HCT116 (cell line): ENCODE measurements at regions of chr18 and their contacts with region 1.

Region 1: GRCh38 chr18:30999186-30999585 is 43.4 kb downstream of the DSC3 start:
- DNase-seq: no peak
- ATAC-seq: no peak
- H3K4me3 ChIP-seq: no peak overlapping the region
- H3K27ac ChIP-seq: no peak overlapping the region
- H3K4me1 ChIP-seq: no peaks in the 10 kb centered on the region
- H3K27me3 ChIP-seq: no peaks in the 10 kb centered on the region
- CTCF ChIP-seq: peak in 2 of 3 experiments; percentile 44 to 45; a peak in 3 of 6 replicates
- POLR2A ChIP-seq: no peak
- RAD21 ChIP-seq: peak; percentile 60

Region 2: GRCh38 chr18:31206787-31207381 is 207.7 kb after region 1 on chr18:
- CTCF ChIA-PET with region 1: no interaction called
- POLR2A ChIA-PET with region 1: no interaction called
- RAD21 ChIA-PET with region 1: no interaction called
- intact Hi-C with region 1: loop called (anchors 10 kb)
- DNase-seq: peak; percentile 97
- ATAC-seq: peak; percentile 95
- H3K4me3 ChIP-seq: peak overlapping the region; percentile 8 to 20; a peak in 3 of 4 replicates
- H3K27ac ChIP-seq: peak overlapping the region; percentile 32
- H3K4me1 ChIP-seq: peaks cover 17 to 32% of the 10 kb centered on the region in 2 experiments
- H3K27me3 ChIP-seq: no peaks in the 10 kb centered on the region
- CTCF ChIP-seq: peak in 2 of 3 experiments; percentile 25 to 44; a peak in 3 of 6 replicates
- POLR2A ChIP-seq: no peak
- RAD21 ChIP-seq: peak; percentile 63

Region 3: GRCh38 chr18:31274915-31275314 is 275.7 kb after region 1 on chr18:
- CTCF ChIA-PET with region 1: no interaction called
- POLR2A ChIA-PET with region 1: no interaction called
- RAD21 ChIA-PET with region 1: no interaction called
- intact Hi-C with region 1: loop called (anchors 5 kb)
- DNase-seq: peak; percentile 66
- ATAC-seq: peak; percentile 65; the same call in 1 of the 2 replicates
- H3K4me3 ChIP-seq: peak overlapping the region in 1 of 2 experiments; percentile 27; a peak in 2 of 4 replicates
- H3K27ac ChIP-seq: peak overlapping the region; percentile 6; the same call in 1 of the 2 replicates
- H3K4me1 ChIP-seq: peaks cover 22 to 26% of the 10 kb centered on the region in 2 experiments
- H3K27me3 ChIP-seq: no peaks in the 10 kb centered on the region
- CTCF ChIP-seq: no peak
- POLR2A ChIP-seq: no peak
- RAD21 ChIP-seq: no peak

Region 4: GRCh38 chr18:31399306-31400032 is 400.3 kb after region 1 on chr18:
- CTCF ChIA-PET with region 1: no interaction called
- POLR2A ChIA-PET with region 1: no interaction called
- RAD21 ChIA-PET with region 1: no interaction called
- intact Hi-C with region 1: loop called (anchors 10 kb)
- DNase-seq: peak; percentile 83
- ATAC-seq: peak; percentile 83
- H3K4me3 ChIP-seq: peak overlapping the region; percentile 4 to 39; a peak in 3 of 4 replicates
- H3K27ac ChIP-seq: peak overlapping the region; percentile 64
- H3K4me1 ChIP-seq: peaks cover 49 to 54% of the 10 kb centered on the region in 2 experiments
- H3K27me3 ChIP-seq: no peaks in the 10 kb centered on the region
- CTCF ChIP-seq: no peak
- POLR2A ChIP-seq: no peak
- RAD21 ChIP-seq: peak; percentile 5; the same call in 1 of the 2 replicates

Region 5: DNA sequence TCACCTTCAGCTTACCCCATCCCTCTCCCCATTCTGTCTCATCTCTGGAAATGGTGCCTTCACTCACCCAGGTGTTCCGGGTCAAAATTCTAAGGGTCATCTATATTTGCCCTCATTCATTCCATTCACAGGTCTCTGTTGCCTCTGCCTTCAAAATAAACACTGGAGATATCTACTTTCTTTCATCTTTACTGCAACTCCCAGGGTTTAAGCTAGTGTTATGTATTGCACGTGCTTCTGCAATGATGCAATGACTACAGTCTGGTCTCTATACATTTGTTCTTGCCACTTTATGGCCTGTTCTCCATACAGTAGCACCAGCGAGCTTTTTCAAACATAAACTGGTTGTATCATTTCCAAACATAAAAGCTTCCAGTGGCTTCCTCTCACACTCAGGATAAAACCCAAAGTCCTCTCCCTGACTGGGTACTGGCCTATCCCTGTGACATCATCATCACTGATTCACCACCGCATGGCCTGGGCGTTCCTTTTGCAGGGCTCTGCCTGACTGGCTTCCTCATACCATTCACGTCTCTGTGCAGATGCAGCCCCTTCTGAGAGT is 513.1 kb after region 1 on chr18:
- CTCF ChIA-PET with region 1: no interaction called
- POLR2A ChIA-PET with region 1: no interaction called
- RAD21 ChIA-PET with region 1: no interaction called
- intact Hi-C with region 1: loop called (anchors 5 kb)
- DNase-seq: no peak
- ATAC-seq: peak; percentile 89
- H3K4me3 ChIP-seq: peak overlapping the region in 1 of 2 experiments; percentile 39; a peak in 1 of 4 replicates
- H3K27ac ChIP-seq: peak overlapping the region; percentile 36
- H3K4me1 ChIP-seq: peaks cover 57 to 59% of the 10 kb centered on the region in 2 experiments
- H3K27me3 ChIP-seq: no peaks in the 10 kb centered on the region
- CTCF ChIP-seq: no peak
- POLR2A ChIP-seq: no peak
- RAD21 ChIP-seq: no peak

Region 6: GRCh38 chr18:31563778-31564177 is 564.6 kb after region 1 on chr18:
- CTCF ChIA-PET with region 1: interaction called, 12 read pairs
- POLR2A ChIA-PET with region 1: no interaction called
- RAD21 ChIA-PET with region 1: no interaction called
- intact Hi-C with region 1: no loop called
- DNase-seq: no peak
- ATAC-seq: no peak; the same call in 1 of the 2 replicates
- H3K4me3 ChIP-seq: no peak overlapping the region
- H3K27ac ChIP-seq: no peak overlapping the region
- H3K4me1 ChIP-seq: no peaks in the 10 kb centered on the region
- H3K27me3 ChIP-seq: no peaks in the 10 kb centered on the region
- CTCF ChIP-seq: peak in 2 of 3 experiments; percentile 22 to 30; a peak in 2 of 6 replicates
- POLR2A ChIP-seq: no peak
- RAD21 ChIP-seq: peak; percentile 43